Endothelial cell of umbilical vein (primary cell): ENCODE measurements at regions of chr1 and their contacts with region 1.

Region 1: DNA sequence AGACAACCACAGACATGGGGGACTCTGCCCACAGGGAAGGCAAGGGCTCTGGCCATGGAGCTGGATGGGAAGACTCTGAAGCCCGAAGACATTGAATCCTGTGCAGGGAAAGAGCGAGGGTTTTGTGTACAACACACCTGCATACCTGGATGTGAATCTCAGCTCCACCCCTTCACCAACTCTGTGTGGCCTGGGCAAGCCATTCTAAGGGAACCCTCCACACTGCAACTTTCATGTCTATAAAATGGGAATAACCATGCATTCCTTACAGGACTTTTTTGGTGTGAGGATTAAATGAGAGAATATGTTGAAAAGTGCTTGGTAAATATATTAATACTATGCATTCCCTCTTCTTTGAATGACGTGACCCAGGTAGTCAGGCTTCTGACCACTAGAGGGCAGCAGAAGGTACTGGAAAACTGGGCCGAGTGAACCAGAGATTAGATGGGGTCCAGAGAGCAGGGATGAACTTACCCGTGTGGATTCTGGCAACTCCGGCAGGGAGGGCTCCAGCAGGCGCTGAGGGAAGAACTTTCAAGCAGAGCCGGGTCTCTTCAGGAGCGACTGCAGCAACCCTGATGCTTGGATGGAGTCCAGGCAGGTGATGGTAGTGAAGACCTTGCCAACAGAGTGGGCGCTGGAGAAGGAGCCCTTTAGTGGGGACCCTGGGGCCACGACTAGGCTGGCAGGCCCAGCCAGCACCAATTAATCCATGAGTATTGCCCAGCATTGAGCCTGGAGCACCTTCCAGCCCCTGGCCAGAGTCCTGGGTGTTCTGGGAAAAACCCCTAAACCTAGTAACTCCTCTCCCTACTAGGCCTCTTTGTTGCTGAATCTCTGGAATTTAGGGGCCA is 834 bp upstream of the ELF3 start:
- DNase-seq: peak; percentile 60
- H3K4me3 ChIP-seq: no peak overlapping the region
- H3K27ac ChIP-seq: no peak overlapping the region
- H3K4me1 ChIP-seq: peaks cover 3% of the 10 kb centered on the region
- H3K27me3 ChIP-seq: no peaks in the 10 kb centered on the region
- CTCF ChIP-seq: peak; percentile 83 to 87
- POLR2A ChIP-seq: no peak

Region 2: GRCh38 chr1:202034683-202035462 is 25.3 kb after region 1 on chr1:
- CTCF ChIA-PET with region 1: no interaction called
- POLR2A ChIA-PET with region 1: no interaction called
- dilution Hi-C with region 1: no loop called
- intact Hi-C with region 1: no loop called
- DNase-seq: no peak
- H3K4me3 ChIP-seq: no peak overlapping the region
- H3K27ac ChIP-seq: no peak overlapping the region
- H3K4me1 ChIP-seq: no peaks in the 10 kb centered on the region
- H3K27me3 ChIP-seq: peaks cover 2 to 5% of the 10 kb centered on the region in 2 experiments
- CTCF ChIP-seq: no peak
- POLR2A ChIP-seq: no peak

Region 3: DNA sequence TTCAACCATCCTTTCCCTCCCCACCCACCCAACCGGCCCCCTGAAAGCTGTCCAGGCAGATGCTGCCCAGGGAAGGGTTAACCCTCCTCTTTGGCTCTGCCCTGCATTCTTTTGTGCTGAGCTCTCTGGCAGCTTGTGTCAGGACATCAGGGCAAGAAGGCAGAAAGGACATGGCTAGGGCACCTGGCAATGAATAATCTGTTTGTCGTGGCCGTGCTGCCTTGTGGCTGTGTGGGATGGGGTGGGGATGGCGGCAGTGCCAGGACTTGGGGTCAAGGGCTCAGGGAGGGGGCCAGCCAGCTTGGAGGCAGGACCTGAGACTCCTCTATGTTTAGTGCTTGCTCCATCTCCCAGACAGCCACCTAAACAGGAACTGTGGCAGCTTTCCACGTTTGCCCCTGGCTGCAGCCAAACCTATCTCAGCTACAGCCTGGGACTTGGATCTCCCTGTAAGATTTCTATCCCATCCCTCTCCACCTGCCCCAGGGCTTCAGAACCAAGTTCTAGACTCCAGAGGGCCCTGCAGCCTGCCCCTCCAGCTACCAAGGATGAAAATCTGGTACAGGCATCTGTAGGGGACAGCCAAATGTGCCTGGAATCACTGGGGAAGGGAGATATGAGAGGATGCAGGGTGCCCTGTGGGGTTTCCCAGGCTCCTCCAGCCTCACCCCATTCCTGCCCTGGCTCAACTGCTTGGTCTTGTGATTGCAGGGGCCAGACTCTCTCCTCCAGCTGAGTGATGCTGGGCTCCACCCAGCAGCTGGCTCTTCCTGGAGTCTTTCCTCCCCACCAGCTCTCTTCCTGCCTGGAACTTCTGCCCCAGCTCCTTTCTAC is 103.5 kb after region 1 on chr1:
- CTCF ChIA-PET with region 1: interaction called, 61 read pairs
- POLR2A ChIA-PET with region 1: no interaction called
- dilution Hi-C with region 1: no loop called
- intact Hi-C with region 1: no loop called
- DNase-seq: no peak
- H3K4me3 ChIP-seq: no peak overlapping the region
- H3K27ac ChIP-seq: no peak overlapping the region
- H3K4me1 ChIP-seq: no peaks in the 10 kb centered on the region
- H3K27me3 ChIP-seq: peaks cover 0 to 3% of the 10 kb centered on the region in 2 experiments
- CTCF ChIP-seq: no peak
- POLR2A ChIP-seq: no peak

Region 4: DNA sequence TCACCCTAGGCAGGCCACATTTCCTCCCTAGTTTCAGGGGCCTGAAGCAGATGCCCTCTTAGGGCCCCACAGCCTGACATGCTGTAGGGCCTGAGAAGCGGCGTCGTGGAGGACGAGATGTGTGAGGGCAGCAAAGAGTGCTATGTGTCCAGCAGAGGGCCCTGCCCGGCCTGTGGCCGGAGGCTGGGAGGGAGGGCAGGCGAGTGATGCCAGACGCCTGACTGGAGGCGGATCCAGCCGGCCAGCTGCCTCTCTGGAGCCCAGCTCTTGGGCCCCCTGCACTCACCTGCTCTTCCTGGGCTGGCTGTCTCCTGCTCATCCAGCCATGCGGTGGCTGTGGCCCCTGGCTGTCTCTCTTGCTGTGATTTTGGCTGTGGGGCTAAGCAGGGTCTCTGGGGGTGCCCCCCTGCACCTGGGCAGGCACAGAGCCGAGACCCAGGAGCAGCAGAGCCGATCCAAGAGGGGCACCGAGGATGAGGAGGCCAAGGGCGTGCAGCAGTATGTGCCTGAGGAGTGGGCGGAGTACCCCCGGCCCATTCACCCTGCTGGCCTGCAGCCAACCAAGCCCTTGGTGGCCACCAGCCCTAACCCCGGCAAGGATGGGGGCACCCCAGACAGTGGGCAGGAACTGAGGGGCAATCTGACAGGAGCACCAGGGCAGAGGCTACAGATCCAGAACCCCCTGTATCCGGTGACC is 113.2 kb after region 1 on chr1 and contains the start of gene GPR37L1:
- CTCF ChIA-PET with region 1: interaction called, 61 read pairs
- POLR2A ChIA-PET with region 1: no interaction called
- dilution Hi-C with region 1: no loop called
- intact Hi-C with region 1: loop called (anchors 1 kb)
- DNase-seq: peak; percentile 49
- H3K4me3 ChIP-seq: no peak within 1 kb of the TSS
- H3K27ac ChIP-seq: no peak within 1 kb of the TSS
- H3K4me1 ChIP-seq: no peaks in the 10 kb centered on the region
- H3K27me3 ChIP-seq: peaks cover 4 to 10% of the 10 kb centered on the region in 2 experiments
- CTCF ChIP-seq: peak; percentile 53 to 80
- POLR2A ChIP-seq: no peak
- total RNA-seq, gene GPR37L1: not detected in 2 replicates

Region 5: DNA sequence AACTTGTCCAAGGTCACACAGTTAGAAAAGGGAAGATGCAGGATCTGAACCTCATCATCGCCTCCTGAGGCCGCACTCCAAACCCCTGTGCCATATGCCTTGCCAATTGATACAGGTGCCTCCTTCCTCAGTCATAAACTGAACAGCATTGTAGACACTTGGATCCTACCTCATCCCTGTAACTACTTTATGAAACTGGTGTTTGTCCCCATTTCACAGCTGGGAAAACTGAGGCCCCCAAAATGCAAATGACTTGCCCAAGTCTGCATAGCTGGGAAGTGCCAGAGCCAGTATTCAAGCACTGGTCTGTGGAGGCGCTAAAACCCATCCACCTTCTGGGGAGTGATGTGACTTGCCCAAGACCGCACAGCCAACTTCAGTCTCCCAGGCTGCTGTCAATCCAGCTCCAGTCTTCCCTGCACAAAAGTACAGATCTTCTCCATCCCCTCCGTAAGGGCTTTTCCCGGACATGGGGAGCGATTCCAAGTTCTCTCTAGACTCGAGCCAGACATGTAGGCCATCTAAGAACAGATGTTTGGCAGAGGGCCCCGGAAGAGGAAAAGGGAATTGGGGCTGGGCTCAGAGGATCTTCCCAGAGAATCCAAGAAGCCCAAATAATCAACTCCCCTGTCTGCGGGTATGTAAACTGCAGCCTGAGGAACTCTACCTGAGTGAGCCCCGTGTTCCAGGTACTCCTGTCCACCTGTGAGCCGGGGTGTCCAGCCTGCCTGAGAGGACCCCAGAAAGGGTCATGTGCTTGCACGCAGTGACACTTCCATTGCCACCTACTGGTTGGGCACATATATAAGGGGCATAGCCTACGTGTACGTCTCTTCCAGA is 640.2 kb after region 1 on chr1:
- CTCF ChIA-PET with region 1: no interaction called
- POLR2A ChIA-PET with region 1: no interaction called
- dilution Hi-C with region 1: no loop called
- intact Hi-C with region 1: no loop called
- DNase-seq: no peak
- H3K4me3 ChIP-seq: no peak overlapping the region
- H3K27ac ChIP-seq: no peak overlapping the region
- H3K4me1 ChIP-seq: no peaks in the 10 kb centered on the region
- H3K27me3 ChIP-seq: peaks cover 17 to 37% of the 10 kb centered on the region in 2 experiments
- CTCF ChIP-seq: no peak
- POLR2A ChIP-seq: no peak